ENCODE measurements at regions of chr2 and their contacts with region 1.

Region 1: DNA sequence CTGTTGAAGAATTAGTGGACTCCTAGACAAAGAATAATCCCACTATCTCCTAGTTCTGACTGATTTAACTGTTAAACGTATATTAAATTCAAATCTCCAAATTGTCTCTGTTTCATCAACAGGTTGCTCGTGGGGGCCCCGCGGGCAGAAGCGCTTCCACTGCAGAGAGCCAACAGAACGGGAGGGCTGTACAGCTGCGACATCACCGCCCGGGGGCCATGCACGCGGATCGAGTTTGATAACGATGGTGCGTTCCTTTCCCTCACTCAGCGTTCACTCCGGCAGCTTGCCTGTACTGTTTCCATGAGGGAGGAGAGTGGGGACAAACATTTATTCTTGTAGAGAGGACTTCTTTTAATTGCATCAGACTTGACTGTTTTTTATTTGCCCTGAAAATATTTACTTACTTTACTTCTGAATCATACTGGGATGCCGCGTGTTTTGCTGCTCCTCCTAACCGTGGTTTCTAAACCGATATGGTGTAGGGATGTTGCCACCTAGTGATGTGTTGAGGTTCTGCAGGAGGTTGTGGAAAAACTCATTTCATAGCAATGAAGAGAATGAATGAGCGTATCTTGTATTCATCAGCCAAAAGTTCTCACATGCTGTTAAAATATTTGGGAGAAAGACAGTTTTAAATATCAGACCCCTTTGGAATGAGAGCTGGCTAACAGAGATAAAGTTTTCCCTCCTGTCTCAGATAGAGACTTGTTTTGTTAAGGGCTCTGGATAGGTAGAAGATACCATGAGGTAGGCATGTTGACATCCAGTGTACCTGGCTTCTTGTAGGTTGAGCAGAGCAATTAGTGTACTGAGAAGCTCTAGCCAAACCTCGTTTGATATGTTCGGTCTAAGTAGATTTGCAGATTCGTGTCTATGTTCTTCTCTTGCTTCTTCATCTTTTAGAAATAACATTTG is 38.3 kb downstream of the ITGA6 start:
- DNase-seq: no peak
- ATAC-seq: peak; percentile 51
- H3K4me3 ChIP-seq: no peak overlapping the region
- H3K27ac ChIP-seq: no peak overlapping the region
- H3K4me1 ChIP-seq: peaks cover 23 to 50% of the 10 kb centered on the region in 2 experiments
- H3K27me3 ChIP-seq: no peaks in the 10 kb centered on the region
- CTCF ChIP-seq: peak; percentile 58 to 84 (median 78); a peak in 5 of 6 replicates
- POLR2A ChIP-seq: no peak
- RAD21 ChIP-seq: peak; percentile 90

Region 2: GRCh38 chr2:171703574-171704347 is 761.9 kb before region 1 on chr2:
- CTCF ChIA-PET with region 1: interaction called, 3 read pairs
- POLR2A ChIA-PET with region 1: no interaction called
- RAD21 ChIA-PET with region 1: interaction called in 1 of 2 experiments, 3 read pairs
- intact Hi-C with region 1: loop called (anchors 1 kb)
- DNase-seq: peak; percentile 29
- ATAC-seq: peak; percentile 65; the same call in 1 of the 2 replicates
- H3K4me3 ChIP-seq: no peak overlapping the region
- H3K27ac ChIP-seq: no peak overlapping the region
- H3K4me1 ChIP-seq: peaks cover 0 to 4% of the 10 kb centered on the region in 2 experiments; a peak in 2 of 4 replicates
- H3K27me3 ChIP-seq: no peaks in the 10 kb centered on the region
- CTCF ChIP-seq: peak; percentile 41 to 60 (median 49); a peak in 4 of 6 replicates
- POLR2A ChIP-seq: no peak
- RAD21 ChIP-seq: peak; percentile 69

Region 3: DNA sequence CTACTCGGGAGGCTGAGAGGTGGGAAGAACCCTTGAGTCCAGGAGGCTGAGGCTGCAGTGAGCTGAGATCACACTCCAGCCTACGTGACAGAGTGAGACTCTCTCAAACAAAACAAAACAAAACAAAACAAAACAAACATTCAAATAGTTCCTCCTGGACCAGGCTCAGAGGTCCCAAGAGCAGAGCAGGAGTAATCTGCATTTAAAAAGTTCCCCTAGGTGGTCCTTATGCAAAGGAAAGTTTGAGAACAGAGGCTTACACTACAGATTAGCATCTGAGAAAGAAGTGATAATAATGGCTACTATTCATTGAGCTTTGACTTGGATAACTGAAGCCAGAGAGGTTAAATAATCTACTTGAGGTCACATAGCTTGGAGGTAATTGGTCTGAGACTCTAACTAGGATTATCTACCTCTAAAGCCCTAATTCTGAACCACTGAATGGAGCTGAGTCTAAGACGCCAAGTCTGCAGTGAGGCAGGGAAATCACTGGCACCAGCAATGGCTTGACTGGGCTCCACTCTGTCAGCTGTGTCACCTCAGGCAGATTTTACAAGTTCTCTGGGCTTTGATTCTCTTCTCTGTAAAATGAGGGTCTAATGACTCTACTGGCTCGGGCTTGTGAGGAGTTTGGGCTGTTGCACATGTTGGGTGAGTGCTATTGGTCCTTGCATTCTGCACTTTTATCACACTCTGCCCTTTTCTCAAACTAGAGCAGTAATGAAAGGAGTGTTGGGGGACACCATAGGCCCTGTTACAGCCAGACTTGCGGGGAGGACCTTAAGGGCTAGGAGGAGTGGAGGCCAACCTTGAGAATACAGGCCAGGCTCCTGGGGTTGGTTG is 333.7 kb before region 1 on chr2:
- CTCF ChIA-PET with region 1: interaction called, 17 read pairs
- POLR2A ChIA-PET with region 1: no interaction called
- RAD21 ChIA-PET with region 1: interaction called in 1 of 2 experiments, 3 read pairs
- intact Hi-C with region 1: no loop called
- DNase-seq: no peak
- ATAC-seq: no peak
- H3K4me3 ChIP-seq: no peak overlapping the region
- H3K27ac ChIP-seq: no peak overlapping the region
- H3K4me1 ChIP-seq: no peaks in the 10 kb centered on the region
- H3K27me3 ChIP-seq: no peaks in the 10 kb centered on the region
- CTCF ChIP-seq: no peak
- POLR2A ChIP-seq: no peak
- RAD21 ChIP-seq: no peak

Region 4: DNA sequence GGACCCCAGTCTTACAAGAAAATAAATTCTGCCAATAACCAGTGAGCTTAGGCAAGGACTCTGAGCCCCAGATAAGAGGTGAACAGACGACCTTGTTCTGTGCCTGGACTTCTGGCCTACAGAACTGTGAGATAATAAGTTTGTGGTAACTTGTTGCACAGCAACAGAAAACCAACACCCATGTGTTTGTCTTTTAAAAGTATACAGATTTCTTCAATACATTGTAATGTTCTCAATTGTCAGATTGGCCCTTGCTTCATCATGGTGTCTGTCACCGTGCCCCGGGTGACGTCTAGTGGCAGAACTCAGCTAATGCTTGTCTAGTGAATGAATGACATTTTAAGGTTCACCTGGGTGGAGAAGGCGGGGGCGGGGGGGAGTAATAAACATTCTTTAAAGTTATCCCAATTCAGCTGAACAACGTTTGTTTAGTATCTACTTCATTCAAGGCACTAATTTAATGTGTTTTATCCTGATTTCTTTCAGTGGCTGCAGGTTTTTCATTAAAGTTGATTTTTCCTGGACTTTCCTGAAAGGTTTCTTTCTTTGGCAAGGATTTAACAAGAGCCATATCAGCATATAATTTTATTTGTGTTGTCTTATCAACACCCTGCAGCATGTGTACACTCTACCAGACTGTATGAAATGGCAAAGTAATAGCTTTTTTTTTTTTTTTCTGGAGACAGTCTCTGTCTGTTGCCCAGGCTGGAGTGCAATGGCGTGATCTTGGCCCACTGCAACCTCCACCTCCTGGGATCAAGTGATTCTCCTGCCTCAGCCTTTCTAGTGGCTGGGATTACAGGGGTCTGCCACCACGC is 239.2 kb before region 1 on chr2:
- CTCF ChIA-PET with region 1: interaction called, 25 read pairs
- POLR2A ChIA-PET with region 1: no interaction called
- RAD21 ChIA-PET with region 1: no interaction called
- intact Hi-C with region 1: loop called (anchors 2 kb)
- DNase-seq: no peak
- ATAC-seq: peak; percentile 94
- H3K4me3 ChIP-seq: no peak overlapping the region
- H3K27ac ChIP-seq: no peak overlapping the region
- H3K4me1 ChIP-seq: peaks cover 2 to 20% of the 10 kb centered on the region in 2 experiments
- H3K27me3 ChIP-seq: no peaks in the 10 kb centered on the region
- CTCF ChIP-seq: peak; percentile 52 to 68 (median 65); a peak in 5 of 6 replicates
- POLR2A ChIP-seq: no peak
- RAD21 ChIP-seq: peak; percentile 79

Region 5: DNA sequence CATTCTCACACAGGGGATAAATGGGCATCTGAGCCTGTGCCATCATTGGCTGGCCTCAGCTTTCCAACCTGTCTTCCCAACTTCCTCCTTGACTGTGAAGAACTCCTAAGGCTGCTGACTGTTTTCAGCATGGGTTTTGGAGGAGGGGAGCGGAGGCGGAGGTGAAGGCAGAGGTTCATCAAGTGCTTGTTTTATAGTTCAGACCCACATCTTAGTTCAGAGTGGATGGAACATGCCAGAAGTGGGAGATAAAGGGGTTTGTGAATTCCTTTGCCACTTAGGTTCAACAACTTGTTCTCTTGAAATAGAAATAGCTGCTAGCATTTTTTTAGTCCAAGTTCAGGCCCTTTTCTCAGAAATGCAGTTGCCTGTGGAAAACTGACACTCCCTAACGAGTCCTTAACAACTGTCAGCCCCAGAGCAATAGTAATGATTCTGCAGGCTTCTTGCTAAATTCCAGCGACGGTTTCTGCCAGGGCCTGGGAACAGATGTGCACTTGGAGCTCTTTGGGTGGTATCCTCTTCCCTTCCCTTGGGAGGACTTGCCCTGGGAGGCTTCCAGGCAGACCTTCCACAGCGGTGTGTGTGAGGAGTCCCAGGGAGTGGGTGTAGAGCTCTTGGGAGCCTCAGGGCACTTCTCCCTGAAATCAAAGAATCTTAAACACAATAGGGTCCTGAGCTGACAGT is 68.4 kb before region 1 on chr2:
- CTCF ChIA-PET with region 1: interaction called, 13 read pairs
- POLR2A ChIA-PET with region 1: no interaction called
- RAD21 ChIA-PET with region 1: no interaction called
- intact Hi-C with region 1: no loop called
- DNase-seq: no peak
- ATAC-seq: no peak
- H3K4me3 ChIP-seq: no peak overlapping the region
- H3K27ac ChIP-seq: no peak overlapping the region
- H3K4me1 ChIP-seq: no peaks in the 10 kb centered on the region
- H3K27me3 ChIP-seq: no peaks in the 10 kb centered on the region
- CTCF ChIP-seq: no peak
- POLR2A ChIP-seq: no peak
- RAD21 ChIP-seq: no peak

Region 6: GRCh38 chr2:172449911-172450550 is 15.6 kb before region 1 on chr2:
- CTCF ChIA-PET with region 1: interaction called, 10 read pairs
- POLR2A ChIA-PET with region 1: interaction called, 4 read pairs
- RAD21 ChIA-PET with region 1: interaction called in 1 of 2 experiments, 5 read pairs
- intact Hi-C with region 1: no loop called
- DNase-seq: no peak
- ATAC-seq: peak; percentile 73
- H3K4me3 ChIP-seq: peak overlapping the region in 1 of 2 experiments; percentile 4; a peak in 1 of 4 replicates
- H3K27ac ChIP-seq: peak overlapping the region; percentile 40; the same call in 1 of the 2 replicates
- H3K4me1 ChIP-seq: peaks cover 49 to 87% of the 10 kb centered on the region in 2 experiments
- H3K27me3 ChIP-seq: no peaks in the 10 kb centered on the region
- CTCF ChIP-seq: no peak
- POLR2A ChIP-seq: no peak
- RAD21 ChIP-seq: no peak

Region 7: GRCh38 chr2:172680436-172681068 is 214.9 kb after region 1 on chr2:
- CTCF ChIA-PET with region 1: no interaction called
- POLR2A ChIA-PET with region 1: no interaction called
- RAD21 ChIA-PET with region 1: no interaction called
- intact Hi-C with region 1: no loop called
- DNase-seq: no peak
- ATAC-seq: no peak
- H3K4me3 ChIP-seq: no peak overlapping the region
- H3K27ac ChIP-seq: no peak overlapping the region
- H3K4me1 ChIP-seq: no peaks in the 10 kb centered on the region
- H3K27me3 ChIP-seq: no peaks in the 10 kb centered on the region
- CTCF ChIP-seq: no peak
- POLR2A ChIP-seq: no peak
- RAD21 ChIP-seq: no peak

Measured in HCT116 (cell line).